CD8-positive, alpha-beta memory T cell (primary cell): ENCODE measurements at regions of chr11 and their contacts with region 1.

Region 1: DNA sequence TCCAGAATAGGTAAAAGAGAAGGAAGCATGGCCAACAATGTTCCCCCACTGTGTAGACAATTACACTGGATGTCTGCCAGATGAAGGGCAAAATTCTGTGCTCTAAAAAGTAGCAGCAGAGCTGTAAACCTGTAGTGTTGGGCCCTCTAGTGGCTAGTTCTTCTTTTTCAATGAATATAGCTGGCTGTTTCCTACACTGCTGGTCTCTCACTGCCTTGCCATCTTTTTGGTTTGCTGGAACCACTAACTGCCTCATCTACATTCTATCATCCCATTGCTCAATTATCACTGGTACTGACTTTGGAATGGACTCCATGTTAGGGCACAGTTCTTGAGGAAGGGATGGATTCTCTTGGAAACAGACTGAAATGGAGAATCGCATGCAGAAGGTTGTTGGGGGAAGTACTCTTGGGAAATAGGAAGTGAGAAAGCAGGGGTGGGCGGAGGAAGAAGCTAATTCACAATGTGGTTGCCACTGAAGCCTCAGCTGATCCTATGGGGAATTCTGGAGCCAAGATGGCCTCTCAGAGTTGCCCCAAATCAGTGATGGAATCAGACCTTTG is 17.9 kb downstream of the KCNE3 start:
- DNase-seq: peak in 3 of 5 donors; percentile 51 to 65 (median 52)
- H3K4me3 ChIP-seq: no peak overlapping the region
- H3K4me3 Mint-ChIP-seq: no peak overlapping the region
- H3K27ac ChIP-seq: no peak overlapping the region
- H3K27ac Mint-ChIP-seq: no peak overlapping the region
- H3K4me1 ChIP-seq: no peaks in the 10 kb centered on the region
- H3K4me1 Mint-ChIP-seq: peaks cover 0 to 4% (median 0%) of the 10 kb centered on the region in 3 donors
- H3K27me3 ChIP-seq: no peaks in the 10 kb centered on the region
- H3K27me3 Mint-ChIP-seq: peaks cover 10 to 16% of the 10 kb centered on the region in 2 donors

Region 2: DNA sequence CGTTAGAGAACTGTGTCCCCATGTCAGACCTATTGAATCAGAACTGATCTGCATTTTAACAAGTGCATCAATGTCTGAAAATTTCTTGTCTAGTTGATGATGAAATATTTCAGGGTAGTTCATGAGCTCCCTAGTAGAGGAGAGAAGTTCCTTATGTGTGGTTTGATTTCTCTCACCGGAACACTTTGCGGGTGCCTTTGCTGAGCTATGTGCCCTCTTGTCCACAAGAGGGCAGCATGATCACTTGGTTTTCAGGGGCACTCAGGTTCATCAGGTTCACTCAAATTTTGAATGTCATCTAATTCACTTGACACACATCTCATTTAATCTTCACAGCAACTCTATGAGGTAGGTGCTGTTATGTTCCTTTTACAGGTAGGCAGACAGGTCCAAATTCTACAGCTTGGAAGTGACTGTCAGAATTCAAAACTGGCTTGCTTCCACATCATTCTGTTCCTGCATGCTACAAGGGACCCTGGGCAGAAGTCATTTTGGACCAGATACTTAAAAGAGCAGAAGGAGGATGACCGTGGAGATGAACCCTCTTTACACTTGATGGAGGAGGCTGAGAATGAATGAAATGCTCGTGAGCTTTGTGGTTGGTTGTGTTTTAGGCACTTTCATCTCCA is 193.6 kb before region 1 on chr11:
- CTCF ChIA-PET with region 1: interaction called, 16 read pairs
- POLR2A ChIA-PET with region 1: no interaction called
- DNase-seq: peak; percentile 25 to 59 (median 31)
- H3K4me3 ChIP-seq: no peak overlapping the region
- H3K4me3 Mint-ChIP-seq: no peak overlapping the region
- H3K27ac ChIP-seq: no peak overlapping the region
- H3K27ac Mint-ChIP-seq: peak overlapping the region in 2 of 8 donors; percentile 4 to 43
- H3K4me1 ChIP-seq: no peaks in the 10 kb centered on the region
- H3K4me1 Mint-ChIP-seq: peaks cover 0 to 6% (median 0%) of the 10 kb centered on the region in 3 donors
- H3K27me3 ChIP-seq: no peaks in the 10 kb centered on the region
- H3K27me3 Mint-ChIP-seq: peaks cover 1 to 2% of the 10 kb centered on the region in 2 donors

Region 3: GRCh38 chr11:74388678-74389327 is 60.6 kb before region 1 on chr11:
- CTCF ChIA-PET with region 1: interaction called, 166 read pairs
- POLR2A ChIA-PET with region 1: interaction called, 3 read pairs
- DNase-seq: peak in 4 of 5 donors; percentile 22 to 74 (median 55)
- H3K4me3 ChIP-seq: no peak overlapping the region
- H3K4me3 Mint-ChIP-seq: no peak overlapping the region
- H3K27ac ChIP-seq: no peak overlapping the region
- H3K27ac Mint-ChIP-seq: peak overlapping the region in 2 of 8 donors; percentile 1 to 43
- H3K4me1 ChIP-seq: peaks cover 4% of the 10 kb centered on the region
- H3K4me1 Mint-ChIP-seq: peaks cover 14 to 30% (median 26%) of the 10 kb centered on the region in 3 donors
- H3K27me3 ChIP-seq: no peaks in the 10 kb centered on the region
- H3K27me3 Mint-ChIP-seq: no peaks in the 10 kb centered on the region

Region 4: DNA sequence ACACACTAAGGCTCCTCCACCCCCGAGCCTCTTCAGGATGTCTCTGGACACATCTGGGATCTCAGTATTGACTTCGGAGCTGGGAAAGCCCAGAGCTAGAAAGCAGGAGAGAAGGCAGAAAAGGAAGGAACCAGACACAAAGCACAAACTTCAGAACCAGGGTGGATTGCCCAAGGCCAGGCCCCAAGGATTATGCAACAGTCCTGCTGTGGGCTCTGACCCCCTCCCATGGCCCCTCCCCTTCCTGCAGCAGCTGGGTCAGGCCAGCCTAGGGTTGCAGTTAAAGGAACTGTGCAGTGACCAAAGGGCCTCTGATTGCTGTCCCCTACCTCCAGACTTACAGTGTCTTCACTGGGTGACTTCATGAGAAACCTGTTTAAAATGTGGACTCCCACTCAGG is 12.6 kb after region 1 on chr11:
- CTCF ChIA-PET with region 1: interaction called, 14 read pairs
- POLR2A ChIA-PET with region 1: no interaction called
- DNase-seq: no peak
- H3K4me3 ChIP-seq: no peak overlapping the region
- H3K4me3 Mint-ChIP-seq: no peak overlapping the region
- H3K27ac ChIP-seq: peak overlapping the region; percentile 38
- H3K27ac Mint-ChIP-seq: no peak overlapping the region
- H3K4me1 ChIP-seq: no peaks in the 10 kb centered on the region
- H3K4me1 Mint-ChIP-seq: peaks cover 0 to 1% (median 0%) of the 10 kb centered on the region in 3 donors
- H3K27me3 ChIP-seq: peaks cover 3% of the 10 kb centered on the region
- H3K27me3 Mint-ChIP-seq: peaks cover 15 to 28% of the 10 kb centered on the region in 2 donors

Region 5: GRCh38 chr11:74570266-74571061 is 121.0 kb after region 1 on chr11:
- CTCF ChIA-PET with region 1: interaction called, 24 read pairs
- POLR2A ChIA-PET with region 1: interaction called, 3 read pairs
- DNase-seq: no peak
- H3K4me3 ChIP-seq: no peak overlapping the region
- H3K4me3 Mint-ChIP-seq: no peak overlapping the region
- H3K27ac ChIP-seq: no peak overlapping the region
- H3K27ac Mint-ChIP-seq: no peak overlapping the region
- H3K4me1 ChIP-seq: no peaks in the 10 kb centered on the region
- H3K4me1 Mint-ChIP-seq: no peaks in the 10 kb centered on the region
- H3K27me3 ChIP-seq: no peaks in the 10 kb centered on the region
- H3K27me3 Mint-ChIP-seq: peaks cover 10 to 17% of the 10 kb centered on the region in 2 donors